Naive thymus-derived CD4-positive, alpha-beta T cell (primary cell): ENCODE measurements at regions of chr2 and their contacts with region 1.

Region 1: DNA sequence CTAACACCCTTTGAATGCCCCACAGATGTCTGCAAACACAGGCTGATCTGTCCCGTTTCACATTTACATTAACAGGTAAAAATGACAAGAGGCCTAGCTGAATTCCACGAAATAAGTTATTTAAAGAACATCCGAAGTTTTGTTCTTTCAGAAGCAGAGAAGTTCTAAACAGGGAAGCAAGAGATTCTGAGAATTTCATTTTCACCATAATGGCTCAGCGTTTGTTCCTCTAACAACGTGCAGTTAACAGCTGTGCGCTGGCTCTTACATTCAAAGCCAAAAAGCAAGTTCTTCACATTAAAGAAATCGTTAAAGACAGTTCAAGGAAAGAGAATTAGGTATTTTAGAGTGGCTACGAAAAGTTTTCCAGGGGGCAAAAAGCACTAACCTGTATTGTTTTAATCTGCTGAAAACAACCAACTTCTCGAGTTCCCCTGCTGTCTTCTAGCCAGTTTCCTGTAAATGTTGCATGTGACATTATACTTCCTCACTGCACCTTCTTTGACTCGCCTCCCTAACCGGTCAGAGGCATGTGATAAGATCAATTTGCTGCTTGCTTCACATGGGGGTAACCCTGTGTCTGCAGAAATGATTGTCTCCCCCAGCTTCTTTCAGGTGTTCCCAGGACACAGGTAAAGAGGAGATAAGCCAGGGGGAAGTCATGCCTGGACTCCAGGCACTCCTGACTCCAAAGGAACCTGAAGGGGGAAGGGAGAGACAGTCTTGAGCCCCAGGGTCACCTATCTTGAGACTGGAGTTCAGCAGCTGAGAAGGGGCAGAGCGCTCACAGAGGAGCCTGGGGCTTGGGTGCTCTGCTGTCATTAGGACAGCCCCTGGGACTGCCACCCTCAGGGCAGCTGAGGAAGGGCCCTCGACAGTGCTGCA is 36.8 kb upstream of the WIPF1 start:
- DNase-seq: peak in 8 of 9 donors; percentile 42 to 66 (median 54)
- ATAC-seq: peak; percentile 83
- H3K4me3 ChIP-seq: peak overlapping the region; percentile 78
- H3K4me3 Mint-ChIP-seq: peak overlapping the region; percentile 90 to 100 (median 93)
- H3K27ac ChIP-seq: peak overlapping the region; percentile 82
- H3K27ac Mint-ChIP-seq: peak overlapping the region; percentile 94 to 99 (median 96)
- H3K4me1 ChIP-seq: peaks cover 44% of the 10 kb centered on the region in 2 donors
- H3K4me1 Mint-ChIP-seq: peaks cover 46 to 77% (median 72%) of the 10 kb centered on the region in 7 donors
- H3K27me3 ChIP-seq: no peaks in the 10 kb centered on the region
- H3K27me3 Mint-ChIP-seq: no peaks in the 10 kb centered on the region

Region 2: DNA sequence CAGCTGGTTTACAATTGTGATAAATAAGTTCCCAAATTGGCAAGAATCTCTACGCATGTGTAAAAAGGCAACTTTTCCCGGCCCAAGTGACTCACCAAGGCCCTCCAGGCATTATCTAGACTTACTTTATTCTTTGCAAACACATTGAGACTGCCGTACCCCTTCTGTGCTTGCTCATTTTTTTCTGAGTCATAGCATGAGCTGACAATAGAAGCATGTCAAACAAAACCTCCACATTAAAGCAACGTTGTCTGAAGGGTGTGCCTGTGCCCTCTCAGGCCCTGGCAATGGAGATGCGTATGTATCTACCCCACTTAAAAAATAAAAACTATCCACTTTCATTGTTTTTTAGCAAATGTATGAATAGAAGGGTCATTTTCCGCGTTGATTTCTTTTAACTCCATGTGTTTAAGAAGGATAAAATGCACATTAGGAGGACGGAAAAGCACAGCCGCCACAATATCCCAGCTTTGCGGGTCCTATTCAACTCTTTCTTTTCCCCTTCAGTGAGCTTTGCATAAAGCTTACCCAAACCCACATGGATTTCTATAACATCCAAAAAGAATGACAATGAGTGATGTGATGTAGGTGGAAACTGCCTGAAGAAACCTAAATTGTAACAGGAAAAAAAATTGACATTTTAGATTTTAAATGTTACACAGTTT is 981.5 kb before region 1 on chr2:
- CTCF ChIA-PET with region 1: no interaction called
- POLR2A ChIA-PET with region 1: no interaction called
- intact Hi-C with region 1: no loop called
- DNase-seq: no peak
- ATAC-seq: no peak
- H3K4me3 ChIP-seq: no peak overlapping the region
- H3K4me3 Mint-ChIP-seq: no peak overlapping the region
- H3K27ac ChIP-seq: no peak overlapping the region
- H3K27ac Mint-ChIP-seq: no peak overlapping the region
- H3K4me1 ChIP-seq: no peaks in the 10 kb centered on the region
- H3K4me1 Mint-ChIP-seq: no peaks in the 10 kb centered on the region
- H3K27me3 ChIP-seq: no peaks in the 10 kb centered on the region
- H3K27me3 Mint-ChIP-seq: peaks cover 0 to 19% (median 10%) of the 10 kb centered on the region in 5 donors

Region 3: DNA sequence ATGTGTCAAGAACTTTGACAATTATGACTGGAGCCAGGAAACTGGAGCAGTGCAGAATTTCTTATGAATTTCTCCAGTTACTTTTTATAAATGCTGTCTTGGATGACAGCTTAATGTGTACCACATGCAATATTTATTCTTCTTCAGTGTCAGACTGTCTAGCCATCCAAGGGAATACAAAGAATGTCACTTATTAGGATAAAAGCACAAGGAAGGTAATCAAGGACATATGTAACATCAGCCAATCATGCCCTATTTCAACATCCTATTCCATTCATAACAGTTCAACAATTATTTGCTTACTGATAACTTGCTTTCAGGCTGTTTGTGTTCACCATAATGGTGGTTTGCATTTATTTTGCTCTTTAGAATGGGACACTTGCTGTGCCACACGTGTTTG is 525.8 kb before region 1 on chr2:
- CTCF ChIA-PET with region 1: no interaction called
- POLR2A ChIA-PET with region 1: no interaction called
- intact Hi-C with region 1: no loop called
- DNase-seq: no peak
- ATAC-seq: no peak
- H3K4me3 ChIP-seq: no peak overlapping the region
- H3K4me3 Mint-ChIP-seq: no peak overlapping the region
- H3K27ac ChIP-seq: no peak overlapping the region
- H3K27ac Mint-ChIP-seq: no peak overlapping the region
- H3K4me1 ChIP-seq: no peaks in the 10 kb centered on the region
- H3K4me1 Mint-ChIP-seq: no peaks in the 10 kb centered on the region
- H3K27me3 ChIP-seq: no peaks in the 10 kb centered on the region
- H3K27me3 Mint-ChIP-seq: no peaks in the 10 kb centered on the region

Region 4: GRCh38 chr2:174577967-174578589 is 56.3 kb before region 1 on chr2:
- CTCF ChIA-PET with region 1: interaction called, 4 read pairs
- POLR2A ChIA-PET with region 1: interaction called, 5 read pairs
- intact Hi-C with region 1: loop called in 1 of 2 experiments (anchors 1 kb)
- DNase-seq: peak in 7 of 9 donors; percentile 55 to 77 (median 68)
- ATAC-seq: peak; percentile 86
- H3K4me3 ChIP-seq: no peak overlapping the region
- H3K4me3 Mint-ChIP-seq: peak overlapping the region in 1 of 10 donors; percentile 27
- H3K27ac ChIP-seq: peak overlapping the region; percentile 33
- H3K27ac Mint-ChIP-seq: peak overlapping the region in 8 of 9 donors; percentile 46 to 91 (median 81)
- H3K4me1 ChIP-seq: peaks cover 56 to 74% of the 10 kb centered on the region in 2 donors
- H3K4me1 Mint-ChIP-seq: peaks cover 31 to 91% (median 77%) of the 10 kb centered on the region in 7 donors
- H3K27me3 ChIP-seq: no peaks in the 10 kb centered on the region
- H3K27me3 Mint-ChIP-seq: no peaks in the 10 kb centered on the region

Region 5: DNA sequence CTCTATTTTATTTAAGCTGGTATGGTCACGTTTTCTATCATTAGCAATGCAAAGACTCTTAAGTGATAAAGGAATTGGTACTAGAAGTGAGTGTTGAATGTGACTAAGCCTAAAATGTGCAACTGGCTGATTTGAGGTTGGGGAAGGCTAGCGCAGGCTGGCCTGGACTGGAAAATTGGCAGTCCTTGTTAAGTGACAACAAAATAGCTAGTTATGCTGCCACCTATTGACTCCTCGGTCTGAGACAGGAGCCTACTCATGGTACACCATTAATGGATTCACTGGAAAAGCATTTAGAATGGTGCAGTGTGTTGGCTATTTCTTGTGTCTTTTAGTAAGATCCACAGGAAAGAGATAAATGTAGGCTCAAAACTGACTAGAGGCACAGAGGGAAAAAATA is 31.1 kb before region 1 on chr2:
- CTCF ChIA-PET with region 1: interaction called, 5 read pairs
- POLR2A ChIA-PET with region 1: interaction called, 66 read pairs
- intact Hi-C with region 1: loop called (anchors 1 kb)
- DNase-seq: peak in 7 of 9 donors; percentile 47 to 67 (median 58)
- ATAC-seq: peak; percentile 79
- H3K4me3 ChIP-seq: no peak overlapping the region
- H3K4me3 Mint-ChIP-seq: peak overlapping the region in 8 of 10 donors; percentile 7 to 87 (median 26)
- H3K27ac ChIP-seq: peak overlapping the region; percentile 46
- H3K27ac Mint-ChIP-seq: peak overlapping the region; percentile 77 to 98 (median 93)
- H3K4me1 ChIP-seq: peaks cover 57 to 75% of the 10 kb centered on the region in 2 donors
- H3K4me1 Mint-ChIP-seq: peaks cover 70 to 97% (median 94%) of the 10 kb centered on the region in 7 donors
- H3K27me3 ChIP-seq: no peaks in the 10 kb centered on the region
- H3K27me3 Mint-ChIP-seq: no peaks in the 10 kb centered on the region

Region 6: GRCh38 chr2:174623690-174624089 is 10.7 kb before region 1 on chr2:
- CTCF ChIA-PET with region 1: interaction called, 5 read pairs
- POLR2A ChIA-PET with region 1: interaction called, 17 read pairs
- intact Hi-C with region 1: loop called (anchors 1 kb)
- DNase-seq: no peak
- ATAC-seq: peak; percentile 20
- H3K4me3 ChIP-seq: no peak overlapping the region
- H3K4me3 Mint-ChIP-seq: peak overlapping the region in 5 of 10 donors; percentile 19 to 48 (median 43)
- H3K27ac ChIP-seq: no peak overlapping the region
- H3K27ac Mint-ChIP-seq: peak overlapping the region; percentile 8 to 73 (median 48)
- H3K4me1 ChIP-seq: peaks cover 32 to 43% of the 10 kb centered on the region in 2 donors
- H3K4me1 Mint-ChIP-seq: peaks cover 51 to 96% (median 86%) of the 10 kb centered on the region in 7 donors
- H3K27me3 ChIP-seq: no peaks in the 10 kb centered on the region
- H3K27me3 Mint-ChIP-seq: no peaks in the 10 kb centered on the region

Region 7: GRCh38 chr2:174682578-174683391 is 48.4 kb after region 1 on chr2:
- CTCF ChIA-PET with region 1: interaction called, 7 read pairs
- POLR2A ChIA-PET with region 1: interaction called, 12 read pairs
- intact Hi-C with region 1: loop called (anchors 1 kb)
- DNase-seq: peak; percentile 56 to 73 (median 71)
- ATAC-seq: peak; percentile 78
- H3K4me3 ChIP-seq: peak overlapping the region; percentile 72
- H3K4me3 Mint-ChIP-seq: peak overlapping the region; percentile 92 to 99 (median 96)
- H3K27ac ChIP-seq: peak overlapping the region; percentile 88
- H3K27ac Mint-ChIP-seq: peak overlapping the region; percentile 91 to 98 (median 96)
- H3K4me1 ChIP-seq: peaks cover 11% of the 10 kb centered on the region in 2 donors
- H3K4me1 Mint-ChIP-seq: peaks cover 34 to 69% (median 61%) of the 10 kb centered on the region in 7 donors
- H3K27me3 ChIP-seq: no peaks in the 10 kb centered on the region
- H3K27me3 Mint-ChIP-seq: no peaks in the 10 kb centered on the region